Naive thymus-derived CD4-positive, alpha-beta T cell (primary cell): ENCODE measurements at regions of chr5 and their contacts with region 1.

Region 1: DNA sequence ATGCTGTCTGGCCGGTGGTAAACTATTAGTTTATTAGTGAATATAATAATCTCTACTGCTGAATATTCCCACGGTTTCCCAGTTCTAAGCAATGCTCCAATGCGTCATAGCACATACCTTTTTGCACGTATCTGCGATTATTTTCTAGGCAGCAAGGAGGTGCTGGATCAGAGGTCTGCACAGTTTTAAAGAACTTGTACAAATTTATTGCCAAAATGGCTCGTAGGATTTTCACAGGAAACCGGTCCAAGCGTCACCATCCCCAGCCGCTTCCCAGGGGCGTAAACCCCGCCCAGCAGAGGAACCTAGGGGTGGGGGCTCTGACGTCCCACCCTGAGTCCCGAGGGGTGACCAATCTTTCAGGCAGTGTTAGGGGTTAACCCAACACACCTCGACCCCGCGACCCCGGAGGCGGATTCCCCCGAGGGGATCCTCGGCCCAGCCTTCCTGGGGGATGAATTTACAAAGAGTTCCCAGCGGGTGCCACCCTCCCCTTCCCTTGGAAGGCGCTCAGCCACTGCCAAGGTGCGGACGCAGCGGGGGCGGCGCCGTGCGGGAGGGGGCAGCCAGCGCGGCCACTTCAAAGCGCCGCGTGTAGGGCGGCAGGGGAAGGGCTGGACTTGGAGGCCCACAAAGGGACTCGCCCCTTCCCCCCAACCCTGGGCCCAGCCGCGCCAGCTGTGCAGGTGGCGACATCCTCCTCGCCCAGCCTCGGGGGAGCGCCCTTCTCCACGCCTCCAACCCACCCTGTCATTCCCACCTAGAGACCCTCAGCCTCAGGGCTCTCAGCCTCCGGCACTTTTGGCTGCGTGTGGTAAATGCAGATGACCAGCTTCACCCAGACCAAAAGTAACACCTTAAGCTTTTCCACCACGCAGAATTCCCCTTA is 43.5 kb upstream of the TCF7 start:
- DNase-seq: peak in 5 of 9 donors; percentile 27 to 61 (median 41)
- ATAC-seq: peak; percentile 50
- H3K4me3 ChIP-seq: peak overlapping the region; percentile 62
- H3K4me3 Mint-ChIP-seq: peak overlapping the region; percentile 74 to 95 (median 87)
- H3K27ac ChIP-seq: peak overlapping the region; percentile 72
- H3K27ac Mint-ChIP-seq: peak overlapping the region; percentile 79 to 99 (median 95)
- H3K4me1 ChIP-seq: peaks cover 18 to 75% of the 10 kb centered on the region in 2 donors
- H3K4me1 Mint-ChIP-seq: peaks cover 44 to 95% (median 78%) of the 10 kb centered on the region in 7 donors
- H3K27me3 ChIP-seq: no peaks in the 10 kb centered on the region
- H3K27me3 Mint-ChIP-seq: peaks cover 0 to 23% (median 0%) of the 10 kb centered on the region in 5 donors

Region 2: GRCh38 chr5:133714161-133714915 is 356.6 kb before region 1 on chr5:
- CTCF ChIA-PET with region 1: no interaction called
- POLR2A ChIA-PET with region 1: no interaction called
- intact Hi-C with region 1: no loop called
- DNase-seq: no peak
- ATAC-seq: no peak
- H3K4me3 ChIP-seq: no peak overlapping the region
- H3K4me3 Mint-ChIP-seq: no peak overlapping the region
- H3K27ac ChIP-seq: no peak overlapping the region
- H3K27ac Mint-ChIP-seq: no peak overlapping the region
- H3K4me1 ChIP-seq: no peaks in the 10 kb centered on the region
- H3K4me1 Mint-ChIP-seq: no peaks in the 10 kb centered on the region
- H3K27me3 ChIP-seq: no peaks in the 10 kb centered on the region
- H3K27me3 Mint-ChIP-seq: peaks cover 0 to 24% (median 9%) of the 10 kb centered on the region in 5 donors

Region 3: DNA sequence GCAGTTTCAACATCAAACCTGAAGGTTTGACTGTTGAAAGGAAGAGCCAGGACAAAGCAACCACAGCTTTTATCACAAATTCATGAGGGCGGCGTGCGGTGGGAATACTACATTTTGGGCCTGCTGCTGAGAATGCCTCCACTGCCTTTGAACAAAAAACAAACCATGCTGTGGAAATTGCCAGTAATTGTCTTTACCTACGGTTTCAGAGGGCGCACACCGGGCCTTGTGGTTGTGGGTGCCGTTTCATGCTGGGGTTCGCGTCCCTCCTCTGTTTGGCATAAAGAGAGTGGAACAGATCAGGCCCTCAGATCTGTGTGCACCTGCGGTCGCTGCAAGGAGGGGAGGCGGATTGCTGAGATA is 16.0 kb after region 1 on chr5:
- CTCF ChIA-PET with region 1: interaction called, 12 read pairs
- POLR2A ChIA-PET with region 1: interaction called, 62 read pairs
- intact Hi-C with region 1: loop called (anchors 1 kb)
- DNase-seq: peak; percentile 45 to 96 (median 93)
- ATAC-seq: peak; percentile 87
- H3K4me3 ChIP-seq: peak overlapping the region; percentile 32
- H3K4me3 Mint-ChIP-seq: peak overlapping the region; percentile 74 to 87 (median 82)
- H3K27ac ChIP-seq: peak overlapping the region; percentile 66
- H3K27ac Mint-ChIP-seq: peak overlapping the region; percentile 81 to 99 (median 96)
- H3K4me1 ChIP-seq: peaks cover 59 to 87% of the 10 kb centered on the region in 2 donors
- H3K4me1 Mint-ChIP-seq: peaks cover 47 to 98% (median 85%) of the 10 kb centered on the region in 7 donors
- H3K27me3 ChIP-seq: no peaks in the 10 kb centered on the region
- H3K27me3 Mint-ChIP-seq: peaks cover 0 to 24% (median 0%) of the 10 kb centered on the region in 5 donors

Region 4: GRCh38 chr5:134119720-134120119 is 48.8 kb after region 1 on chr5:
- CTCF ChIA-PET with region 1: interaction called, 3 read pairs
- POLR2A ChIA-PET with region 1: interaction called, 191 read pairs
- intact Hi-C with region 1: loop called in 1 of 2 experiments (anchors 1 kb)
- DNase-seq: no peak
- ATAC-seq: no peak
- H3K4me3 ChIP-seq: peak overlapping the region; percentile 86
- H3K4me3 Mint-ChIP-seq: peak overlapping the region; percentile 81 to 100 (median 98)
- H3K27ac ChIP-seq: peak overlapping the region; percentile 97
- H3K27ac Mint-ChIP-seq: peak overlapping the region; percentile 82 to 99 (median 94)
- H3K4me1 ChIP-seq: peaks cover 24 to 81% of the 10 kb centered on the region in 2 donors
- H3K4me1 Mint-ChIP-seq: peaks cover 15 to 73% (median 32%) of the 10 kb centered on the region in 7 donors
- H3K27me3 ChIP-seq: no peaks in the 10 kb centered on the region
- H3K27me3 Mint-ChIP-seq: peaks cover 0 to 27% (median 0%) of the 10 kb centered on the region in 5 donors

Region 5: DNA sequence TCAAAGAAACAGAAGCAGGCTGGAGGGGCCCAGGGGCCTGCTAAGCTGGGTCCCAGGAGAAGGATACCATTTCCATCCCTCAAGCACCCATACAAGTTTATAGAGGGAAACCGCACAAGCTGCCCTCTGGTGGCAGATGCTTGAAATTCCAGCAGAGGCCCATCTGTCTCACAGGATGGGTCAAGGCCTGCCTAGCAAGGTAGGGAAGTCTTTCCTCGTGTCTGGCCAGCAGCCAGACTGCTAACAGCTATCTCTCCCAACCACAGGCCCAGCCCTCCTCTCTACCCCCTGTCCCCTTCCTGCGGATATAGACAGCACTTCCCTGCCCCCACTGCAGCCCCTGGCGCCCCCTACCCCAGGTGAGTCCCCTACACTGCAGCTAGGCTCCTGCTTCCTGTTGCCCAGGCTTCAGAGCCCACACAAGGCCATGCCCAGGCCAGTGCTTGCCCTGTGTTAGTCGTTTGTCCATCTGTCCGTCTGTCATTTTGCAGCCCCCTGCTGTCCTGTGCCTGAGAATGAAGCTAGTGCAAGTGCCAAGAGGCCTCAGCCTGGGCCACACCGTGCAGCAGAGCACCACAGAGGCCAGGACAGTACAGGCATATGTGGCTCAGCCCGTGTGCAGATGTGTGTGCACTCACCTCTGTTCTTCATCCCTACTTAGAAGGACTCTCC is 69.7 kb after region 1 on chr5:
- CTCF ChIA-PET with region 1: interaction called, 6 read pairs
- POLR2A ChIA-PET with region 1: interaction called, 21 read pairs
- intact Hi-C with region 1: loop called in 1 of 2 experiments (anchors 1 kb)
- DNase-seq: peak in 5 of 9 donors; percentile 30 to 63 (median 50)
- ATAC-seq: peak; percentile 67
- H3K4me3 ChIP-seq: no peak overlapping the region
- H3K4me3 Mint-ChIP-seq: peak overlapping the region in 5 of 10 donors; percentile 21 to 58 (median 41)
- H3K27ac ChIP-seq: peak overlapping the region; percentile 97
- H3K27ac Mint-ChIP-seq: peak overlapping the region; percentile 60 to 99 (median 90)
- H3K4me1 ChIP-seq: peaks cover 38 to 61% of the 10 kb centered on the region in 2 donors
- H3K4me1 Mint-ChIP-seq: peaks cover 36 to 81% (median 60%) of the 10 kb centered on the region in 7 donors
- H3K27me3 ChIP-seq: no peaks in the 10 kb centered on the region
- H3K27me3 Mint-ChIP-seq: peaks cover 0 to under 1% (median 0%) of the 10 kb centered on the region in 5 donors

Region 6: DNA sequence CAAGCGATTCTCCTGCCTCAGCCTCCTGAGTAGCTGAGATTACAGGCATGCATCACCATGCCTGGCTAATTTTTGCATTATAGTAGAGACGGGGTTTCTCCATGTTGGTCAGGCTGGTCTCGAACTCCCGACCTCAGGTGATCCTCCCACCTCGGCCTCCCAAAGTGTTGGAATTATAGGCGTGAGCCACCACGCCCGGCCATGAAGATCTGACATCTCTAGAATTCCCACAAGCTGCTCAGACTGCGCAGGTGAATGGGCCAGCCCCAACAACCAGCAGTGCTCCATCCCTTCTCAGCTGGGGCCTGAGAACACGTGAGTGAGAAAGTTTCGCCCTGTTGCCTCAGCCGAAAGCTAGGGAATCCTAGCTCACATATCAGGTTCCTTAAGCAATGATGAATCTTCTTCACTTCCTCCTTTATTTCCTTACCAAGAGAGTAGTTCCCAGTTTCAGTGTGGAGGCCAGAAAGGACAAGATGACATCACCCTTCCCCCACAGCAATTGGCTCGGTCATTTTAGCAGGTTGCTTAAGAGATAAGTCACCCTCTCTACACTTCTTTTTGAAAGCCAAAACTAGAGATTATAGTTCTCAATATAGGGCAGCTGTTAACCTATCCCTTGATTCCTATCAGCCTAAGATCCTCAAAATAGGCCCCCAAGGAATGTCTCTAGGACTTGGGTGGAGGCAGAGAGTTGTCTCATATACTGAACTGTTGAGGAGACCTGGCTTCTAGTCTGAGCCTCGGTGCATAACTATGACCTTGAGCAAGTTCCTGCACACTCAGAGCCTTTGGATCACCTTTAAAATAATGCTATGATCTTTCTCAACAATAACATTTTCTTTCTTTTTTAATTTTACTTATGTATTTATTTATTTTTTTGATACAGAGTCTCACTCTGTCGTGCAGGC is 178.8 kb after region 1 on chr5:
- CTCF ChIA-PET with region 1: no interaction called
- POLR2A ChIA-PET with region 1: no interaction called
- intact Hi-C with region 1: no loop called
- DNase-seq: no peak
- ATAC-seq: peak; percentile 86
- H3K4me3 ChIP-seq: no peak overlapping the region
- H3K4me3 Mint-ChIP-seq: no peak overlapping the region
- H3K27ac ChIP-seq: no peak overlapping the region
- H3K27ac Mint-ChIP-seq: no peak overlapping the region
- H3K4me1 ChIP-seq: no peaks in the 10 kb centered on the region
- H3K4me1 Mint-ChIP-seq: peaks cover 0 to 7% (median 0%) of the 10 kb centered on the region in 7 donors
- H3K27me3 ChIP-seq: no peaks in the 10 kb centered on the region
- H3K27me3 Mint-ChIP-seq: peaks cover 0 to 13% (median 4%) of the 10 kb centered on the region in 5 donors